SK-N-SH (cell line): ENCODE measurements at regions of chr7 and their contacts with region 1.

Region 1: DNA sequence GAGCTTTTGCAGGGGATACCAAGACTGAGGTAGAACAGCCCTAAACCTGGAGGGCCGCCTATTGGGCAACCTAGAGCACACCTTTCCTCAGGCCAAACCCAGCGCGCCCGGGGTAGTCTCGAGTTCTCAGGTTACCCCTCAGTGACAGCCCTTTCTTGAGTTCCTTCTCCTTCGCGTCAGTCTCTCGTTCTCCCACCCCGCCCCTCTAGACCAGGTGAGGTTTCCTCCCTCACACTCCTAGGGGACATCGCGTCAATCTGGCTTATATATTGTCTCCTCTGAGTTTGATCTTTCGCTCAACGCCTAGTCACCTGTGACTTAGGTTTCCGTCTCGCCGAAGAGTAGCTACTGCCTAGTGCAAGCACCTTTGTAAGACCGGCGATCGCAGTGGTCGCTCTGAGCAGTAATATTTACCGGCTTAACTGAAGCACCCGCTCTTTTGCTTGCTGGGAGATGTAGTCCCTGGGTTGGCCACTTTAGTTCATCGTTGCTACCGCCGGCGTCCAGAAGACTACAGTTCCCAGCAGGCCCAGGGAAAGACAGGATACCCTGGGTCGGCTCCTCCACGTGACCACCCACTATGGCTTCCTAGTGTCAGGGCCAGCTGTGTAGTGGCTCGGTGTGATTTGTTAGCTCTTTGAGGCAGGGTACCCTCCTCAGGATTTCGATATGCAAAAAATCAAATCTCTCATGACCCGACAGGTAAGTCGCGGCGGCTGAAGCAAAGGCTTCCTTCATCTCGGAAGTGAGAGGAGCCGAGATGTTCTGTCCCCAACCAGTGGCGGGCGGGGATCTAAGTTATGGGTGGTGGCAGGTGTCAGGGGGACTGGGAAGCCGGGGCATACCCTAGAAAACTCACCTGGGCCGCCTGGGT is at the start of gene VPS50:
- DNase-seq: peak; percentile 90
- H3K4me3 ChIP-seq: peak within 1 kb of the TSS; percentile 83 to 92
- H3K27ac ChIP-seq: peak within 1 kb of the TSS in 1 of 2 experiments; percentile 55; a peak in 1 of 4 replicates
- H3K4me1 ChIP-seq: peaks cover 7 to 17% of the 10 kb centered on the region in 2 experiments; a peak in 2 of 4 replicates
- H3K27me3 ChIP-seq: no peaks in the 10 kb centered on the region
- CTCF ChIP-seq: peak; percentile 7
- EP300 ChIP-seq: peak in 1 of 2 experiments; percentile 36; a peak in 1 of 4 replicates
- RAD21 ChIP-seq: no peak
- polyA plus RNA-seq, gene VPS50: 9.1 and 12.4 TPM in 2 replicates

Region 2: DNA sequence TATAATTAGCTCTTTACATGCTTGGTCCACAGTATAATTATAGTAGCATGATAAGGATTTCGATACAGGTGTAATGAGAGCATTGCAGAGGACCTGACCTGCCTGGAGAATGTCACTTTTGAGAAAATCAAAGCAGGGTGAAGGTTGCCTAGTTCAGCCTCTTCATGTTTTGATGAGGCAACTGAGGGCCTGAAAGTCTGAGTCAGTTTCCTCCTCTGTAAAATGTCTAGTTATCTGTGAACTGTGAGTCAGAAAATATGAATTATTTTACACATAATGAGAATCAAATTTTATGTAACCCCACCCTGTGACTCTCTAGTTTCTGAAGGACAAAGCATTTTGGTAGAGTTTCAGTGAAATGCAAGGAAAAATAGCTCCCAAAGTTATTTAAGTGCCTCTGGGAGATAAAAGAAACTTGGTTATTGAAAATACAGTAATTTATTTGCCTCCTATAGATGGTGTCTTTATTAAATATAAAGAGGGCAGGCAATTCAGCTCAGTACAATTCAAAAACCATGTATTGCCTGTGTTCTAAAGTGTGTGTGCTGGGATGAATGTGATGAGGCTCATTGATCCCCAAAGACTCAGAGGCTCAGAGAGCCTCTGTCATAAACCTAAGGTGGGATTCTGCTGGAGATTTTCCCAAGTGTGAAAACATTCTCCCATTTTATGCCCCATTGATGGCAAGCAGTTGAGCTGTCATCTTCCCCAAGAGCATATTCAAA is 46.6 kb before region 1 on chr7:
- CTCF ChIA-PET with region 1: interaction called, 13 read pairs
- POLR2A ChIA-PET with region 1: no interaction called
- DNase-seq: no peak
- H3K4me3 ChIP-seq: no peak overlapping the region
- H3K27ac ChIP-seq: no peak overlapping the region
- H3K4me1 ChIP-seq: no peaks in the 10 kb centered on the region
- H3K27me3 ChIP-seq: peaks cover 28% of the 10 kb centered on the region
- CTCF ChIP-seq: no peak
- EP300 ChIP-seq: no peak
- RAD21 ChIP-seq: no peak

Region 3: GRCh38 chr7:93212881-93213280 is 19.2 kb before region 1 on chr7:
- CTCF ChIA-PET with region 1: interaction called, 11 read pairs
- POLR2A ChIA-PET with region 1: no interaction called
- DNase-seq: no peak
- H3K4me3 ChIP-seq: no peak overlapping the region
- H3K27ac ChIP-seq: no peak overlapping the region
- H3K4me1 ChIP-seq: no peaks in the 10 kb centered on the region
- H3K27me3 ChIP-seq: peaks cover 12% of the 10 kb centered on the region
- CTCF ChIP-seq: no peak
- EP300 ChIP-seq: no peak
- RAD21 ChIP-seq: no peak

Region 4: DNA sequence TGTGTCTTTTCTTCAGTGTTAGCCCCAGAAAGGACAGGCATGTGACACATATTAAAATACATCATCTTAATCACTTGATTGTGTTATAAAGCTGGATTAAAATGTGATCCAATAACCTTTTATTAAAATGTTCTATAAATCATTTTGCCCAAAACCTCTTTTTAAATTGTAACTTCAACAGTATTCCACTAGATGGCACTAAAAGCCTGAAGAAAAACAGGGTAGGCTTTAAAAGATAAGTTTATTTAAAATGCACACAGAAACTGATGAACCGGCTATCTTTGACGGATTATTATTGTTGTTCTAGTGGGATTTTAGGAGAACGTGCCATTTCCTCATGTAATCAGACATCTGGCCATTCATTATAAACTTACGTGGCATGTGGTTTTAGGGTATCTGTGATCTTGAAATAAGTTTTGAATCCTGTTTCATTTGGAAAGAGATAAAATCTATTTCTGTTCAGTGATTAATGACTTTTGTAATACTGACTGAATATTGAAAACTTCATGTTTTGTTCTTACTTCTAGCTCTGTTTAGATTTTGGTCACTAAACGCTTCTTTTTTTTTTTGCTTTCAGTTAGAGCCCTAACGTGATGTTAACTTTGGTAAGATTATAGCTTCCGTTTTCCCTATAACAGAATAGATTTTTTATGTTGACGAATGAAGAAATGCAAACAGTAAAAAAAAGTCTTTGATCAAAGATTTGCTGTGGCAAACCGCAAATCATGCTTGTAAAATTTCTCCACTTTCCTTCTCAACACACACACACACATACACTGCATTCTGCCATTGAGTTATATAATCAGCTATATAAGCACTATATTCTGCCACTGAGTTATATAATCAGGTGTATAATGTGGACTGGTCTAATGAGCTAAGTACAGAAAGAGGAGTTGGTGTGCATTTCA is 13.7 kb after region 1 on chr7:
- CTCF ChIA-PET with region 1: interaction called, 27 read pairs
- POLR2A ChIA-PET with region 1: no interaction called
- DNase-seq: peak; percentile 27
- H3K4me3 ChIP-seq: no peak overlapping the region
- H3K27ac ChIP-seq: no peak overlapping the region
- H3K4me1 ChIP-seq: peaks cover 0 to 3% of the 10 kb centered on the region in 2 experiments; a peak in 1 of 4 replicates
- H3K27me3 ChIP-seq: no peaks in the 10 kb centered on the region
- CTCF ChIP-seq: peak; percentile 90
- EP300 ChIP-seq: no peak
- RAD21 ChIP-seq: peak; percentile 86

Region 5: DNA sequence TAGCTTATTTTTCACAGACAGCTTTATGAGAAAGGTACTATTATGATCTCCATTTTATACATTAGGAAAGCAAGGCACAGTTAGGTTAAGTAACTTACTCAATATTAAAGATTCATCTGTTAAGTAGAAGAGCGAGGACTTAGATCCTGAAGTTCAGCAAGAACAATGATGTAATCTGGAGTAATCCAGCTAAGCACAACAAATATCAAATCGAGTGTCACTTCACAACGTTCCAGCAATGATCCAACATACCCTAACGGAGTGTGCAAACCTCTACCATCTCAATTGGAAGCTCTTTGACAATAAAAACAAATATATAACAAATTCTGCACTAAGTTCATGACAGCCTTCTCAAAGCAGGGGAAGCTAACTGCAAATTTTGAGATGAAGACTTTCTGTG is 221.2 kb after region 1 on chr7:
- CTCF ChIA-PET with region 1: no interaction called
- POLR2A ChIA-PET with region 1: no interaction called
- DNase-seq: no peak
- H3K4me3 ChIP-seq: no peak overlapping the region
- H3K27ac ChIP-seq: no peak overlapping the region
- H3K4me1 ChIP-seq: no peaks in the 10 kb centered on the region; a peak in 1 of 4 replicates
- H3K27me3 ChIP-seq: no peaks in the 10 kb centered on the region; the same call in 1 of the 2 replicates
- CTCF ChIP-seq: no peak
- EP300 ChIP-seq: no peak
- RAD21 ChIP-seq: no peak